ENCODE measurements at regions of chr19 and their contacts with region 1.

Region 1: DNA sequence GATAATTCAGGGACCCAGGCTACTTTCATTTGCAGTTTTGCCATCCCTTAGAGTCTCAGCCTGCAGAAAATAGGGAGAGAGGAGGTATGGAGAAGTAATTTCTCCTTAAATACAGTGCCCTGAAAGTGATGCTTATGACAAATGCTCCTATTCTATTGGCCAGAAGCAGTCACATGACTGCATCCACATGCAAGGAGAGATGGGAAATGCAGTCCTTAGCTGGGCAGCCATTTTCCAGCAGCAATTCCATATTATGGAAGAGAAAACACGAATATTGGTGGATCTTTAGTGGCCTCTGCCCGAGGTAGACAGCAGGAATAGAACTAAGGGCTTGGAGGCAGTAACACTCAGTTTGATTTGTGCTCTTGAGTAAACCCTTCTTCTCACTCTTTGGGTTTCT is 39.4 kb downstream of the VAV1 start:
- DNase-seq: no peak
- H3K4me3 ChIP-seq: no peak overlapping the region
- H3K27ac ChIP-seq: no peak overlapping the region
- H3K4me1 ChIP-seq: no peaks in the 10 kb centered on the region
- H3K27me3 ChIP-seq: no peaks in the 10 kb centered on the region
- CTCF ChIP-seq: no peak
- EP300 ChIP-seq: no peak
- POLR2A ChIP-seq: no peak

Region 2: DNA sequence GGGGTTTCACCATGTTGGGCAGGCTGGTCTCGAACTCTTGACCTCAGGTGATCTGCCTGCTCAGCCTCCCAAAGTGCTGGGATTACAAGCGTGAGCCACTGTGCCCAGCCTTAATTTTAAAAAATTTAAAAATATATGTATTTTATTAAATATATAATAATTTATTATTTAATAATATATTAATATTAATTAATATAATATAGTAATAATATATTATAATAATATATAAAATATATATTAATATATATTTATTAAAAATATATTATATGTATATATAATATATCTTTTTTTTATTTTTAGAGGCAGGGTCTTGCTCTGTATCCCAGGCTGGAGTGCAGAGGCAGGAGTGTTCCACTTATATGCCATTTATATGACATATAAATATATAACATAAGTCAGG is 22.5 kb after region 1 on chr19:
- intact Hi-C with region 1: loop called in 1 of 4 experiments (anchors 1 kb)
- DNase-seq: no peak
- H3K4me3 ChIP-seq: no peak overlapping the region
- H3K27ac ChIP-seq: no peak overlapping the region
- H3K4me1 ChIP-seq: no peaks in the 10 kb centered on the region
- H3K27me3 ChIP-seq: no peaks in the 10 kb centered on the region
- CTCF ChIP-seq: no peak
- EP300 ChIP-seq: no peak
- POLR2A ChIP-seq: no peak

Region 3: DNA sequence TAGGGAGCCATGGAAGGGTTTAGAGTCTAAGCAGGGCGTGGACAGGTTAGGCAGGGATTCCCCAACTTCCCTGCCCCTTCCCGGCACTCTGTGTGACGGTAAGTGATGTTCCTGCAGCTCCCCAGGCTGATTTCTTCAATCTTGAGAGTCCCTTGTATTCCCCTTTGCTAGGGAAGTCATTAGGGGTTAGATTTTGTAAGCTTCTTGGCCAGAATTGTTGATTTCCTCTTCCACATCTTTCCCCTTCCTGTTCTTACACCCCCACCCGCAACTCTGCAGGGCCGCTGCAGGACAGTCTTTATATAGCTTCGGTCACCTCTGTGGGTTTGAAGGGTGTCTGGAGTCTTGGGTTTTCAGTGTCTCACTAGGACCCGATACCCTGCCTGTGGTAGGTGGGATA is 64.8 kb after region 1 on chr19:
- intact Hi-C with region 1: no loop called
- DNase-seq: no peak
- H3K4me3 ChIP-seq: no peak overlapping the region
- H3K27ac ChIP-seq: no peak overlapping the region
- H3K4me1 ChIP-seq: no peaks in the 10 kb centered on the region
- H3K27me3 ChIP-seq: no peaks in the 10 kb centered on the region
- CTCF ChIP-seq: no peak
- EP300 ChIP-seq: no peak
- POLR2A ChIP-seq: no peak

Region 4: GRCh38 chr19:6945733-6946132 is 133.8 kb after region 1 on chr19:
- intact Hi-C with region 1: no loop called
- DNase-seq: no peak
- H3K4me3 ChIP-seq: no peak overlapping the region
- H3K27ac ChIP-seq: no peak overlapping the region
- H3K4me1 ChIP-seq: no peaks in the 10 kb centered on the region
- H3K27me3 ChIP-seq: no peaks in the 10 kb centered on the region
- CTCF ChIP-seq: no peak
- EP300 ChIP-seq: no peak
- POLR2A ChIP-seq: no peak